ENCODE measurements at regions of chr16 and their contacts with region 1.

Region 1: GRCh38 chr16:30813821-30814189 is 26.8 kb upstream of the ZNF629 start:
- DNase-seq: no peak
- H3K4me3 ChIP-seq: peak overlapping the region; percentile 61 to 64
- H3K4me3 Mint-ChIP-seq: peak overlapping the region; percentile 88 to 93 (median 89)
- H3K27ac ChIP-seq: peak overlapping the region; percentile 57
- H3K27ac Mint-ChIP-seq: peak overlapping the region; percentile 81 to 91 (median 90)
- H3K4me1 ChIP-seq: peaks cover 13% of the 10 kb centered on the region
- H3K4me1 Mint-ChIP-seq: peaks cover 8 to 17% (median 12%) of the 10 kb centered on the region in 4 donors
- H3K27me3 ChIP-seq: no peaks in the 10 kb centered on the region
- H3K27me3 Mint-ChIP-seq: no peaks in the 10 kb centered on the region

Region 2: DNA sequence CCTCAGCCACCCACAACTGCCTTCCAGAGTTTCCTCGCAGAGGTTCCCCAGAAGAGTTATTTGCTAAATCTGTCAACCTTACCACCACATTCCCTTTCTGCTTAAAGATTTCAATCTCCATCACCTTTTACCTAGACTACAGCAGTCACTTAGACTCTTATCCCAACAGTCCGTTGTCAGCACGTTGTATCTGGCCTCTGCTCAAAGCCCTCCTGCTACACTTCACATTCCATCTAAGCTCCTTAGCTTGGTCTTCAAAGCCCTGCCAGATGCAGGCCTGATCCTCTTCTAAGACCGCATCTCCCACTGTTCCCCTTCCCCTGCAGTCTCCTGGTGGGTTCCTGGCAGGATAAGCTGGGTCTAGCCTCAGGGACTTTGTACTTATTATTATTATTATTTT is 125.1 kb before region 1 on chr16:
- CTCF ChIA-PET with region 1: no interaction called
- POLR2A ChIA-PET with region 1: no interaction called
- intact Hi-C with region 1: no loop called
- DNase-seq: no peak
- H3K4me3 ChIP-seq: no peak overlapping the region
- H3K4me3 Mint-ChIP-seq: no peak overlapping the region
- H3K27ac ChIP-seq: no peak overlapping the region
- H3K27ac Mint-ChIP-seq: no peak overlapping the region
- H3K4me1 ChIP-seq: peaks cover 2% of the 10 kb centered on the region
- H3K4me1 Mint-ChIP-seq: peaks cover 2 to 5% (median 4%) of the 10 kb centered on the region in 4 donors
- H3K27me3 ChIP-seq: no peaks in the 10 kb centered on the region
- H3K27me3 Mint-ChIP-seq: no peaks in the 10 kb centered on the region

Region 3: GRCh38 chr16:30724641-30725417 is 89.0 kb before region 1 on chr16:
- CTCF ChIA-PET with region 1: no interaction called
- POLR2A ChIA-PET with region 1: no interaction called
- intact Hi-C with region 1: no loop called
- DNase-seq: no peak
- H3K4me3 ChIP-seq: no peak overlapping the region
- H3K4me3 Mint-ChIP-seq: no peak overlapping the region
- H3K27ac ChIP-seq: no peak overlapping the region
- H3K27ac Mint-ChIP-seq: peak overlapping the region in 1 of 7 donors; percentile 68
- H3K4me1 ChIP-seq: no peaks in the 10 kb centered on the region
- H3K4me1 Mint-ChIP-seq: peaks cover 2 to 18% (median 7%) of the 10 kb centered on the region in 4 donors
- H3K27me3 ChIP-seq: no peaks in the 10 kb centered on the region
- H3K27me3 Mint-ChIP-seq: no peaks in the 10 kb centered on the region

Region 4: GRCh38 chr16:30747799-30748634 is 65.8 kb before region 1 on chr16 and contains the start of gene PHKG2:
- CTCF ChIA-PET with region 1: interaction called, 4 read pairs
- POLR2A ChIA-PET with region 1: interaction called, 18 read pairs
- intact Hi-C with region 1: loop called (anchors 5 kb)
- DNase-seq: peak; percentile 94 to 96 (median 95)
- H3K4me3 ChIP-seq: peak within 1 kb of the TSS; percentile 65 to 71
- H3K4me3 Mint-ChIP-seq: peak within 1 kb of the TSS; percentile 89 to 97 (median 91)
- H3K27ac ChIP-seq: peak within 1 kb of the TSS; percentile 60
- H3K27ac Mint-ChIP-seq: peak within 1 kb of the TSS; percentile 73 to 94 (median 89)
- H3K4me1 ChIP-seq: peaks cover 7% of the 10 kb centered on the region
- H3K4me1 Mint-ChIP-seq: peaks cover 14 to 33% (median 20%) of the 10 kb centered on the region in 4 donors
- H3K27me3 ChIP-seq: no peaks in the 10 kb centered on the region
- H3K27me3 Mint-ChIP-seq: no peaks in the 10 kb centered on the region
- total RNA-seq, gene PHKG2: 54.1 to 54.9 TPM

Region 5: GRCh38 chr16:30761928-30762810 is 51.6 kb before region 1 on chr16 and contains the starts of genes CFAP119 and RNF40:
- CTCF ChIA-PET with region 1: interaction called, 5 read pairs
- POLR2A ChIA-PET with region 1: interaction called, 3 read pairs
- intact Hi-C with region 1: loop called (anchors 1 kb)
- DNase-seq: peak; percentile 89 to 94 (median 91)
- H3K4me3 ChIP-seq: peak within 1 kb of the TSS; percentile 73 to 97
- H3K4me3 Mint-ChIP-seq: peak within 1 kb of the TSS; percentile 94 to 98 (median 97)
- H3K27ac ChIP-seq: peak within 1 kb of the TSS; percentile 71
- H3K27ac Mint-ChIP-seq: peak within 1 kb of the TSS; percentile 94 to 97 (median 96)
- H3K4me1 ChIP-seq: peaks cover 30% of the 10 kb centered on the region
- H3K4me1 Mint-ChIP-seq: peaks cover 11 to 38% (median 27%) of the 10 kb centered on the region in 4 donors
- H3K27me3 ChIP-seq: no peaks in the 10 kb centered on the region
- H3K27me3 Mint-ChIP-seq: no peaks in the 10 kb centered on the region
- total RNA-seq, gene CFAP119: 2.6 to 3.4 TPM
- total RNA-seq, gene RNF40: 101 to 109 TPM

Region 6: DNA sequence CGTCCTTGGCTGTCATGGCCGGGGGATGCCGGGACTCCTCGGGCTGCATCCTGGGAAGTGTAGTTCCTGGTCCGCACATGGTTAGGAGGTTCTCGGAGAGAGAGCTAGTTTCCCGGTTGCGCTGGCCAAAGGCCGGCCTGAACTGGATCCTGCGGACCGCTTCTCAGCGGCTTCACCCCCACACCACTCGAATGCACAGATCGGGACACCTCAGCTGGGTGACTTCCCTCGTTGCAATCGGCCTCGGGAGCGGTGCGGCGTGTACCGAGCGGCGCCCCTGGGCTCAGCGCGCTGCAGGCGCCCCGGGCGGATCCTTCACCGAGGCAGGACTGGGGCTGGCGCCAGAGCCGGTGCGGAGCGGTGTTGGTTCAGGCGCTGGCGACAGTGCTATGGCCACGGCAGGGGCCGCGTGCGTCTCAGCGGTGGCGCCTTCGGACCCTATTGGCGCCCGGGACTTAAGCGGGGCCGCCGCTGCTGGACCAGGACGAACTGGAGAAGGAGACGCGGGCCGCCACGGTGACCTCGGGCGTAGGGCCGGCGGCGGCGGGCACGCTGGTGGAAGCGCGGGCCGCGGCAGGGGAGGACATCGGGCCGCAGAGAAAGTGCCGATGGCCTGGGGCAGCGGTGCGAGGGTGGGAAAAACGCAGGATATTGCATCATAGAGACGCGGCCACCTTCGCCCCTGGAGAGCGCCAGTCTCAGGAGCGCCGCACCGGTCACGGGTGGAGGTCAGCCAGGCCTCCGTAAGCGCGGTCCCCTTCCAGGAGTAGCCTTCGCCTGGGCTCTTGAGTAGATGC is 38.2 kb before region 1 on chr16:
- CTCF ChIA-PET with region 1: interaction called, 3 read pairs
- POLR2A ChIA-PET with region 1: interaction called, 3 read pairs
- intact Hi-C with region 1: loop called (anchors 1 kb)
- DNase-seq: peak; percentile 42 to 59 (median 53)
- H3K4me3 ChIP-seq: peak overlapping the region; percentile 64 to 81
- H3K4me3 Mint-ChIP-seq: peak overlapping the region; percentile 90 to 94 (median 94)
- H3K27ac ChIP-seq: no peak overlapping the region
- H3K27ac Mint-ChIP-seq: peak overlapping the region in 5 of 7 donors; percentile 48 to 84 (median 76)
- H3K4me1 ChIP-seq: peaks cover 12% of the 10 kb centered on the region
- H3K4me1 Mint-ChIP-seq: peaks cover 14 to 32% (median 22%) of the 10 kb centered on the region in 4 donors
- H3K27me3 ChIP-seq: no peaks in the 10 kb centered on the region
- H3K27me3 Mint-ChIP-seq: no peaks in the 10 kb centered on the region

Region 7: GRCh38 chr16:30874821-30875717 is 61.3 kb after region 1 on chr16:
- CTCF ChIA-PET with region 1: interaction called, 3 read pairs
- POLR2A ChIA-PET with region 1: interaction called, 14 read pairs
- intact Hi-C with region 1: loop called (anchors 2 kb)
- DNase-seq: peak; percentile 85 to 89 (median 87)
- H3K4me3 ChIP-seq: peak overlapping the region; percentile 89 to 94
- H3K4me3 Mint-ChIP-seq: peak overlapping the region; percentile 92 to 99 (median 97)
- H3K27ac ChIP-seq: peak overlapping the region; percentile 84
- H3K27ac Mint-ChIP-seq: peak overlapping the region; percentile 91 to 99 (median 94)
- H3K4me1 ChIP-seq: peaks cover 23% of the 10 kb centered on the region
- H3K4me1 Mint-ChIP-seq: peaks cover 16 to 50% (median 31%) of the 10 kb centered on the region in 4 donors
- H3K27me3 ChIP-seq: no peaks in the 10 kb centered on the region
- H3K27me3 Mint-ChIP-seq: no peaks in the 10 kb centered on the region

Region 8: DNA sequence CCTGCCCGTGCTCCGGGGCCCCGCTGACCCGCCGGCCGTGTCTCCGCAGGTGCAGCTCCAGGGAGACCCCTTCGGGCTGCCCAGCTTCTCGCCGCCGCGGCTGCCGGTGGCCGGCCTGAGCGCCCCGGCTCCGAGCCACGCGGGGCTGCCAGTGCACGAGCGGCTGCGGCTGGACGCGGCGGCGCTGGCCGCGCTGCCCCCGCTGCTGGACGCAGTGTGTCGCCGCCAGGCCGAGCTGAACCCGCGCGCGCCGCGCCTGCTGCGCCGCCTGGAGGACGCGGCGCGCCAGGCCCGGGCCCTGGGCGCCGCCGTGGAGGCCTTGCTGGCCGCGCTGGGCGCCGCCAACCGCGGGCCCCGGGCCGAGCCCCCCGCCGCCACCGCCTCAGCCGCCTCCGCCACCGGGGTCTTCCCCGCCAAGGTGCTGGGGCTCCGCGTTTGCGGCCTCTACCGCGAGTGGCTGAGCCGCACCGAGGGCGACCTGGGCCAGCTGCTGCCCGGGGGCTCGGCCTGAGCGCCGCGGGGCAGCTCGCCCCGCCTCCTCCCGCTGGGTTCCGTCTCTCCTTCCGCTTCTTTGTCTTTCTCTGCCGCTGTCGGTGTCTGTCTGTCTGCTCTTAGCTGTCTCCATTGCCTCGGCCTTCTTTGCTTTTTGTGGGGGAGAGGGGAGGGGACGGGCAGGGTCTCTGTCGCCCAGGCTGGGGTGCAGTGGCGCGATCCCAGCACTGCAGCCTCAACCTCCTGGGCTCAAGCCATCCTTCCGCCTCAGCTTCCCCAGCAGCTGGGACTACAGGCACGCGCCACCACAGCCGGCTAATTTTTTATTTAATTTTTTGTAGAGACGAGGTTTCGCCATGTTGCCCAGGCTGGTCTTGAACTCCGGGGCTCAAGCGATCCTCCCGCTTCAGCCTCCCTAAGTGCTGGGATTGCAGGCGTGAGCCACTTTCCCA is 88.5 kb after region 1 on chr16:
- CTCF ChIA-PET with region 1: interaction called, 18 read pairs
- POLR2A ChIA-PET with region 1: interaction called, 19 read pairs
- intact Hi-C with region 1: no loop called
- DNase-seq: peak; percentile 54 to 72 (median 58)
- H3K4me3 ChIP-seq: peak overlapping the region in 1 of 2 donors; percentile 68
- H3K4me3 Mint-ChIP-seq: peak overlapping the region; percentile 94 to 99 (median 96)
- H3K27ac ChIP-seq: peak overlapping the region; percentile 70
- H3K27ac Mint-ChIP-seq: peak overlapping the region; percentile 91 to 99 (median 98)
- H3K4me1 ChIP-seq: peaks cover 41% of the 10 kb centered on the region
- H3K4me1 Mint-ChIP-seq: peaks cover 19 to 47% (median 32%) of the 10 kb centered on the region in 4 donors
- H3K27me3 ChIP-seq: no peaks in the 10 kb centered on the region
- H3K27me3 Mint-ChIP-seq: no peaks in the 10 kb centered on the region